ENCODE measurements at regions of chr6 and their contacts with region 1.

Region 1: DNA sequence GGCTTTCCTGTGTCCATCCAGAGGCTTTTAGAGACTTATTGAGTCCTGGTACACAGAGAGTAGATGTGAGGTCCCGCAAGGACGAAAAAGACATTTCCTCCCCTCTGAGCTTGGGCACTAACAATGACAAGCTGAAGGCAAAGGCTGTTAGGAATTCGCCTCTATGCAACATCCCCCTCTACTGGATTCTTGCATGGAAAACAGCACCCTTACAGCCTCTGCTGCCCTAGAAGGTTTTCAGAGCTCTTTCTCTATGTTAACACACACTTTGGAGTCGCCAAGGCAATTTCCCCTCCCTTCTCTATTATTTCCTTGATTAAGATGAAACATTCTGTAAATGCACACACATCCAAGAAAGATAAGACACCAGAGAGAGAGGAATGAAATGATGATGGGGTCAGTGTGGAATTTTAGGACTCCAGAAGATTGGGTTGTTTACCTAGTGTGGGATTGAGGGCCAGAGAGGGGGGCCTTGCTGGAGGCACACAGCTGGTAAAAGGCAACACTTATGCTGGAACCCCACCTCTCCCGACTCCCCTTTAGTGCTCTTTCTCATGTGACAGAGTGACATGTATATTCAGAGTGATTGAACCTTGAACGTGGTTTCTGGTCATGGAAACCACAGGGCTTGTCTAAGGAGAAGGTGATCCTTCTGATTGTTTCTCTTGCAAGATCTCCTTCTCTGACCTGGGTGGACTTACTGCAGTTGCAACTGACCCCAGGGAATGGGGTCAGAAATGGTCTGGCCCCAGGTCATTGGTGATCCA is 300.7 kb downstream of the CLIC5 start:
- DNase-seq: peak; percentile 62
- H3K4me3 Mint-ChIP-seq: no peak overlapping the region
- H3K27ac Mint-ChIP-seq: peak overlapping the region; percentile 93
- H3K4me1 Mint-ChIP-seq: peaks cover 73% of the 10 kb centered on the region
- H3K27me3 Mint-ChIP-seq: no peaks in the 10 kb centered on the region

Region 2: DNA sequence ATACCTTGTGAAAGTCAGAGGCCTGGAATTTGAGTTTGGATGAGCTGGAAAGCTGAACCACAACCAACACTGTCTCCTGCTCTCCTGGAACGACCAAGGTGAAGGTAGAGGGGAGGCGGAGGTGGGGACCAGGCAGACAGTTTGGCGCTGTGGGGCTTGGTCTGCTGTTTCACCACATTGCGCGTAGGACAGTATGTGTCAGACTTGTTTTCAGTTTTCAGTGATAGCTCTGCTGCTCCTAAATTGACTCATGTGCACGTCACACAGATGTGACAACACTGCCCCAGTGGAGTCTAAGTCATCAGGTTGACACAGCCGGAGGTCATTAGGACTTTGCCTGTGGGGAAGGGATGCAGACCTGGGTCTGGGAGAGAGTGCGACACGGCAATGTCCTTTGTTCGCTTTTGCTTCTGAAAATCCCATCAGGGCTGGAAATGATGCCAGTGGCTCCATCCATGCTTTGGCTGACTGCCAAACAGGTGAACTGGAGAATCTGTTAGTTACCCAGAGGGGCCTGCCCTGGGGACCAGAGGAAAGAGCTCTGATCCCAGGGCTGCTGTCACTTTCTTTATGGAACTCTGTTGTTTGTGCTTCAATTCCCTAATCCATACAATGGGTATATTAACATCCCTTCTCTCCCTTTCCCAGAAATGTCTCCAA is 1071.9 kb before region 1 on chr6:
- CTCF ChIA-PET with region 1: interaction called, 3 read pairs
- POLR2A ChIA-PET with region 1: no interaction called
- intact Hi-C with region 1: loop called (anchors 2 kb)
- DNase-seq: peak; percentile 88
- H3K4me3 Mint-ChIP-seq: peak overlapping the region; percentile 33
- H3K27ac Mint-ChIP-seq: peak overlapping the region; percentile 96
- H3K4me1 Mint-ChIP-seq: peaks cover 39% of the 10 kb centered on the region
- H3K27me3 Mint-ChIP-seq: no peaks in the 10 kb centered on the region

Region 3: DNA sequence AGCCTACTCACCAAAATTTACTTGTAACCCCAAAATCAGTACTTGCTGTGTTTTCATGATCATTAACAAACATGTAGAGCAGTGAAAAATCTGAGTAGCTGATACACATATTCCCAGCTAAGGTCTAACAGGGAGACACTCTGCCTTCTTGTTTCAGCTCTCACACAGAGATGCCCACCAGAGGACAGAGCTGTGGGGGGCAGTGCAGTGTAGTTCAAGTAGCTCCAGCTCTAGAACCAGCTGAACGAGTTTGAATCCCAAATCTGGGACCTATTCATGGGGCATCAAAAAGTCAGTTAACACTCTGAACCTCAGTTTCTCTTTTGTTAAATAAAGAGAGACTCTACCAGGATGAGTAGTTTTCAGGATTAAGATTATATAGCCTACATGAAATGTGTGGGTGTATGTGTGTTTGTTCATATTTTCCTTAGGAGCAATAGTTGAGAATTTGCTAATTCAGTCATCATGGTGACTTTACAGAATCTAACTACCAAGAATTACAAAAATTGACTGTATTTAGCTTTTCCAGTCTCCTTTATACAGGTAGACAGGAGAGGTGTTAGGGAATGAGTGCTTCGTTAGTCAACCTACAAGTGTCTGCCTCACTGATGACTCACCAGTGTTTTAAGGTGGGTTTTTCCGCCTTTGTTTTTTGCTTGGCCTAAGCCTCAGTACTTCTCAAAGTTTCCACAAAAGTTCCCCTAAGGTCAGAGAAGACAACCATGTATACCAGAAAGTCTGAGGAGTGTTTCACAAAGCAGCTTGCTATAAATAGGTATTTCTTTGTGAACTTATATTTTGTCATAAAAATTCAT is 550.8 kb before region 1 on chr6:
- CTCF ChIA-PET with region 1: no interaction called
- POLR2A ChIA-PET with region 1: no interaction called
- intact Hi-C with region 1: loop called (anchors 5 kb)
- DNase-seq: peak; percentile 60
- H3K4me3 Mint-ChIP-seq: peak overlapping the region; percentile 46
- H3K27ac Mint-ChIP-seq: peak overlapping the region; percentile 74
- H3K4me1 Mint-ChIP-seq: peaks cover 42% of the 10 kb centered on the region
- H3K27me3 Mint-ChIP-seq: no peaks in the 10 kb centered on the region

Region 4: DNA sequence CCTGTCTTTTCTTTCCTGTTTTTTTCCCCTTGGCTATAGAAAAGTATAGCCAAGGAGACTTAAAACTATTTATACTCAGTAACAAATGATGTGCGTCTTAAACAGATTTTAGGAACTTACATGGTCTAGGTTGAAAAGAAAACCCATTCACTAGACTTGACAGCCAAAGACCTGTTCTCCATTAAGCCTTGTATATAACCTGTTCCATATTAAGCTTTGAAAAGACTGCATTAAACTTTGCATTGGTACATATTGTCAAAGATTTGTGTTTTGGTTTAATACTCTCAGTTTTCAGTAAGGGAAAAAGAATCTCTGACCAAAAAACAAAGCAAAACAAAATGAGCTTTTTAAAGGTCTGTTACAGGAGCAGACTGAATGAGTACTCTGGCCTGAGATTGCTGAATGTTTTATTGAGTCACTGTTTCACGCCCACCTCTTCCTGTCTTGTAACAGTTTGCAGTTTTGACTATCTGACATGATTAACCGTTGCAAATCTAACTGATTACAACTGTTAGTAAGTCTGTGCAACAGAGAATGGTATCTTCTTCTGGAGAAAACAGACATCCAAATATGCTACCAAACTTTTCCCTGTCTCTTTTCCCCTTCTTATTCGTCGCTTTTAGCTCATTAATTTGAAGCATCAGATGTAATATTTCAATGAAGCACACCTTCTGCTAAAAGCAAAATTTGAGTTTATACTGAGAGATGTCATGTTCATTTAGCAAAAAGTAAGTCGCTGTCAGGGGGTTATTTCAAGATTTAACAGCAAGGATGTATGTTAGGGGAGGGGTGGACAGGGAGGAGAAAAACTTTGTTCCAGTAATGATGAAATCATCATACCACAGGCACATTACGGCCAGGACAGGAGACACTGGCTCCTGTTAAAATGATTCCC is 278.1 kb before region 1 on chr6:
- CTCF ChIA-PET with region 1: interaction called, 7 read pairs
- POLR2A ChIA-PET with region 1: interaction called, 3 read pairs
- intact Hi-C with region 1: loop called (anchors 1 kb)
- DNase-seq: peak; percentile 67
- H3K4me3 Mint-ChIP-seq: peak overlapping the region; percentile 65
- H3K27ac Mint-ChIP-seq: peak overlapping the region; percentile 92
- H3K4me1 Mint-ChIP-seq: peaks cover 85% of the 10 kb centered on the region
- H3K27me3 Mint-ChIP-seq: no peaks in the 10 kb centered on the region

Region 5: DNA sequence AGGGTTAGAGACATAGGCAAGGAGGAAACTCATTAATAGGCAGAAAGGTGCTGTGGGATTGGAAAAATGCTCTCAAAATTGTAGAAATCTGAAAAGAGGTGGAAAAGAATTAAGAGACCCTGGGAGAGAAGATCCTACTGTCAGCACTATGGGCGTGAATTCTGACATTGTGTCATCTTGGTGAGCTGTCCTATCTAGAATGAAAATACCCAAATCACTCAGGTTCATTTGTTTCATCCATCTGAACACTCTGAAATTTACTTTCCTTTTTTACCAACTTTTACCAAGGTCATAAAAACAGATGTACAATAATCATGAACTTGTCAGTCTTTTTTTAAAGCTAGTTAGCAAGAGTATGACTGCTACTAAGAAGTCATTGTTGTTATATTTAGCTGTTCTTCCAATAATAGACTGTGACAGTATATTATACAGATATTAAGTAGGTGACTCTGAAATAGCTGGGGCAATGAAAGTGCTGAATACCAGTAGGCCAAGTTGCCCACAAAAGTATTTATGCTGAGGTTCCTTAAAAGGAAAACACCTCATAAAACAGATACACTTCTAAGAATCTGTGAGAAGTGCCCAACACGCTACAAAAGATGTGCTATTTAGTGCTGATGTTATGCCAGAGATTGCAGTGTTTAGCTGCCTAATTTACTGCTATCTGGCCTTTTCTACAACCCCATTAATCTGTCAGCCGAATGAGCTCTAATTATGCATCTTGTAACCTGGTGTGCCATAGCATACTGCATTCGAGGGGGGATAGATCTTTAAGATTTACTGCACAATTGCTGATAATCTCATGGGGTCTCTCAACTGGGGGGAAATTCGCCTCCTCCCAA is 119.7 kb before region 1 on chr6:
- CTCF ChIA-PET with region 1: interaction called, 4 read pairs
- POLR2A ChIA-PET with region 1: interaction called, 5 read pairs
- intact Hi-C with region 1: loop called (anchors 1 kb)
- DNase-seq: no peak
- H3K4me3 Mint-ChIP-seq: no peak overlapping the region
- H3K27ac Mint-ChIP-seq: peak overlapping the region; percentile 78
- H3K4me1 Mint-ChIP-seq: peaks cover 67% of the 10 kb centered on the region
- H3K27me3 Mint-ChIP-seq: no peaks in the 10 kb centered on the region

Region 6: DNA sequence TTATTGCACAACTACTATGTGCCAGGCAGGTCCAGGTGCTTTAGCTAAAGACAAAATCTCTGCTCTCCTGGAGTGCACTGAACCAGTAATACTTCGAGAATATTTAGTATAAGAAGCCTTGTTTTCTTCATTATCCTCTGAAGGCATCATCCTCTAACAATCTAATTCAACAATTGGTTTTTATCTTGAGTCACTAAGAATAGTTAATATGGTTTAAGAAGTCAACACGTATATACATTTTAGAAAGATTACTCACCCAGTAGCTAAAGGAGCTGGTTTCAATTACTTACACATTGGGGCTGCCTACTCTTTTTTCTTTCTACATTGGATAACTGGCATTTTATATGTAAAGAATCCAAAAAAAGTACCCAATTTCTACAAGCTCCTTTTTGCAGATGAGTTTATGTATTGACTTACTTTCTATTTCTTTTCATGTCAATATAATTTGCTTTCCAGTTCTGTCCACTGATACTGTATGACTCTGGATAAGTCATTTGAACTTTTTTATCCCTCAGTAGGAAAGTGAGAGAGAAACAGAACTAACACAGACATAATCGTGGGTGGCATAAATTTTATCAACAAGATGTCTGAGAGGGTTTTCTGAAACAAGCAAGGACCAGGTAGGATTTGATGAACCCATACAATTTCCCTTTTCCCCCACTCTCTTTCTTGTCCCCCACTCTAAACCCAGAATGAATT is 11.7 kb before region 1 on chr6:
- CTCF ChIA-PET with region 1: interaction called, 14 read pairs
- POLR2A ChIA-PET with region 1: interaction called, 5 read pairs
- intact Hi-C with region 1: no loop called
- DNase-seq: no peak
- H3K4me3 Mint-ChIP-seq: no peak overlapping the region
- H3K27ac Mint-ChIP-seq: peak overlapping the region; percentile 75
- H3K4me1 Mint-ChIP-seq: peaks cover 23% of the 10 kb centered on the region
- H3K27me3 Mint-ChIP-seq: no peaks in the 10 kb centered on the region

Region 7: DNA sequence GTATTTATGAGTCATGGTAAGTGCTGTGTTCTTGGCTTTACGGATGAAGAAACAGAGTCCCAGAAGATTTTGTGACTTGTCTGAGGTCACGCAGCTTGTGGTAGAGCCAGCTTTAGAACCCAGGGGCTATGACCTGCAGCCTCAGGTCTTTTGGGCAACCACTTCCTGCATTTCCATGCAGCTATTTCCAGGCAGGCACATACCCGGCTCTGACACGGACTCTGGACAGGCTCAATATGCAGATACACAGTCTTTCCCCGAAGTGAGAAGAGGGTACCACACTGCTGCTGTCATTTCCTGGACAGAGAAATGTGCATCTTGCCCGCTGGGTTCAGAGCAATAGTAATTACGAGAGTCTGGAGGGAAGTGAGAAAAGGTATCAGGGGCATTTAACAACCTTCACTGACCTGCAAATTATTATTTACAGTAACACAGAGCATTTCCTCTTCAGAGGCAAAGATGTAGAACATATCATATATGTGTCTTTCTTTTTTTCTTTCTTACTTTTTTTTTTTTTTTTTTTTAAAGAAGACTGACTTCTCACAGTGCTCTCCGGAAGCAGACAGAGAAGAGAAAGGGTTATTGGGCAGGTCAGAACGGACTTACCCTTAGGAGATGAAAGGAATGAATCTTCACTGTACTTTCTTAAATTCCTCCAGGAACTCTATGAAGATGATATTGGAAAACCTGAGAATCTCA is 115.7 kb after region 1 on chr6:
- CTCF ChIA-PET with region 1: interaction called, 3 read pairs
- POLR2A ChIA-PET with region 1: interaction called, 6 read pairs
- intact Hi-C with region 1: loop called (anchors 1 kb)
- DNase-seq: peak; percentile 88
- H3K4me3 Mint-ChIP-seq: peak overlapping the region; percentile 75
- H3K27ac Mint-ChIP-seq: peak overlapping the region; percentile 95
- H3K4me1 Mint-ChIP-seq: peaks cover 59% of the 10 kb centered on the region
- H3K27me3 Mint-ChIP-seq: peaks cover 2% of the 10 kb centered on the region

Measured in activated CD4-positive, alpha-beta memory T cell treated with anti-CD3 and anti-CD28 coated beads for 36 hours (primary cell).